Right ventricle myocardium inferior (tissue), 1 donor: ENCODE measurements at regions of chr10 and their contacts with region 1.

Region 1: GRCh38 chr10:28241741-28242399 is 61.0 kb downstream of the MPP7 start:
- DNase-seq: no peak
- ATAC-seq: peak; percentile 67

Region 2: GRCh38 chr10:27446091-27446918 is 795.6 kb before region 1 on chr10:
- intact Hi-C with region 1: loop called (anchors 5 kb)
- DNase-seq: no peak
- ATAC-seq: no peak

Region 3: DNA sequence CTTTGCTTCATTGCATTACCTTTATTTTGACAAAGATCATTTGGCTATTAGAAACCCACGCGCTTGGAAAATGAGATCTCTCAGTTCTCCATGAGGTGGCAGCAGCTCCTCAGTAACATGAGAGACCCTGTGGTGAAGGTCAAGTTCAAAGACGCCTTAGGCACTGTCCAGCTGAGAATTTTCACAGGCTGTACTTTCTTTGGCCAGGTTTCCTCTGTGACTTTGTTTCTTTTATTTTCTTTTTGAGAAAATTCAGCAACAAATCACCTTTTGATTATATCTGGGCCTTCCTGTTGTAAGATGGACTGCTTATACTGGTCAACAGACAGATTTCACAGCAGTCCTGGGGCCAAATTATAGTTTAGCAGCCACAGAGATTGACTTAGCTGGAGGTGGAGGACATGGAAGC is 683.3 kb before region 1 on chr10:
- intact Hi-C with region 1: loop called (anchors 5 kb)
- DNase-seq: no peak
- ATAC-seq: peak; percentile 81

Region 4: GRCh38 chr10:27742195-27743011 is 499.5 kb before region 1 on chr10:
- intact Hi-C with region 1: loop called (anchors 5 kb)
- DNase-seq: peak; percentile 88
- ATAC-seq: peak; percentile 97